Posterior vena cava (tissue), 2 donors: ENCODE measurements at regions of chr17 and their contacts with region 1.

Region 1: DNA sequence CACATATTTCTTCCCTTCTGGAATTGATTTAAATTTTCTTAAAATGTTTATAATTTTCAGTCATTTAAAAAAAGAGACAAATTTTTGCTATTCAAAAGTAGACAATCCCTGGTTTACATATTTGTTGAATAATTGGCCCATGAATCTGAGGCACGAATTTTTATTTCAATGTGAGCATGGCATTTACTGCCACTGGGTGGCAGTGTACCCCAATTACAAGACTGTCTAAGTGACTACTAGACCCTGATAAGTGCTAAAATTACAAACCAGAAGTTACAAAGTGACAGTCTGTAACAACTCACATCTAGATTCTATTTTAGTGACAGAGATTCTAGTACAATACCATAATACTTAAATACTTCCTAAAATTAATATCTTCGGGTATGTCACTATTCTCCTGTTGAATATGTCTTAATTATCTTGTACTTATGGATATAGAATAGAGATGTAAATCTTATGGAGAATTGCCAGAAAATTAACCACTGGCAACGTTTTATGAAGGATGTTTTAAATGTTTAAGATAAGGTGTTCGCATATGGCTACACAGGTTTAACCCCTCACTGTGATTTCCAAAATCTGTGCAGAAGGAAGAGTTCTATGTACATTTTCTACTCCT is 235.8 kb downstream of the MAP2K4 start:
- DNase-seq: no peak

Region 2: GRCh38 chr17:12568358-12569251 is 312.1 kb after region 1 on chr17:
- intact Hi-C with region 1: loop called in 1 of 2 experiments (anchors 10 kb)
- DNase-seq: no peak

Region 3: GRCh38 chr17:12667299-12667958 is 410.9 kb after region 1 on chr17:
- intact Hi-C with region 1: loop called in 1 of 2 experiments (anchors 5 kb)
- DNase-seq: no peak

Region 4: DNA sequence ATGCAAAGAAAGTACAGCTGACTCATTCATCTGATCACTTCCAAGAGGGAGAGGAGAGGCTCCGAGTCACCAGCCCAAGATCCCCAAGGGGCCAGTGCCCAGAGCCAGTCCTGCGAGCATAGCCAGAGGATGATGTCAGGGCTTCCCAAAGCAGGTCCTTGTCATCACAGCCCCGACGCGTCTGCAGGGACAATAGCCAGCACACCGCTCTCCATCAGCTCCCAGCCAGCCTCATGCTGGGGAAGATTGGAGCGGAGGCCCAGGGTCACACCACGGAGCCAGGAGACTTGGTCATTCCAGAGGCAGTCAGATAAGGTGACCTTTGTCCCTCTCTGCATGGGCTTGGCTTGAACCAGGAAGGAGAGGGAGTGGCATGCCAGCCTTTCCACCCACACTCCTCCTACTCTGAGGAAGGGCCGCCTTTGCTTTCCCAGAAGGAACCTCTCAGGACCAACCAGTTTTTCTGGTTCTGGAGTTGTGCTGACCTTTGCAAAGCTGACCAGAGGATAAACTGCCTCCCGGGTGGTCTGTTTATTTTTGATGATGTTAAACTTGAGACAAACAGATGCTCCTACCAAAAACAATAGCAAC is 474.5 kb after region 1 on chr17:
- intact Hi-C with region 1: loop called in 1 of 2 experiments (anchors 10 kb)
- DNase-seq: peak; percentile 94